MCF 10A (cell line): ENCODE measurements at regions of chr3 and their contacts with region 1.

Region 1: DNA sequence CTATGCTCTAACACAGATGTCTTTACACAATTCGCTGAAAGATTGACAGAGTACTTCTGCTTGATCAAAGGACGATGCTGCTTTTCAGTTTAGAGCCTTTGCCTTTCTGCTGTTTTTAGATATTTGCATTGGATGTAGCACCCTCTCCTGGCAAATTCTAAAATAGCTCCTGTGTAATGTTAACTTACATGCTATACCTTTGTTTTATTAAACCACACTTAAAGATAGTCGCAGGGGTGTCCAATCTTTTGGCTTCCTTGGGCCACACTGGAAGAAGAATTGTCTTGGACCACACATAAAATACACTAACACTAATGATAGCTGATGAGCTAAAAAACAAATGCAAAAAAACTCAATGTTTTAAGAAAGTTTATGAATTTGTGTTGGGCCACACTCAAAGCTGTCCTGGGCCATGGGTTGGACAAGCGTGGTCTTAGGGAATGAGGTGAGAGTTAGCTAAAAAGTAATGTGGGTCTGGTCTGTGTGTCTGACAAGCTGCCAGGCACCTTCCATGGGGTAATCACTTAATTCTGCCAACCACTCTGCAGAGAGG is 62.9 kb downstream of the ATG7 start:
- DNase-seq: peak; percentile 77
- H3K4me3 Mint-ChIP-seq: no peak overlapping the region
- H3K27ac Mint-ChIP-seq: no peak overlapping the region
- H3K4me1 Mint-ChIP-seq: no peaks in the 10 kb centered on the region
- H3K27me3 Mint-ChIP-seq: no peaks in the 10 kb centered on the region
- CTCF ChIP-seq: peak; percentile 55

Region 2: DNA sequence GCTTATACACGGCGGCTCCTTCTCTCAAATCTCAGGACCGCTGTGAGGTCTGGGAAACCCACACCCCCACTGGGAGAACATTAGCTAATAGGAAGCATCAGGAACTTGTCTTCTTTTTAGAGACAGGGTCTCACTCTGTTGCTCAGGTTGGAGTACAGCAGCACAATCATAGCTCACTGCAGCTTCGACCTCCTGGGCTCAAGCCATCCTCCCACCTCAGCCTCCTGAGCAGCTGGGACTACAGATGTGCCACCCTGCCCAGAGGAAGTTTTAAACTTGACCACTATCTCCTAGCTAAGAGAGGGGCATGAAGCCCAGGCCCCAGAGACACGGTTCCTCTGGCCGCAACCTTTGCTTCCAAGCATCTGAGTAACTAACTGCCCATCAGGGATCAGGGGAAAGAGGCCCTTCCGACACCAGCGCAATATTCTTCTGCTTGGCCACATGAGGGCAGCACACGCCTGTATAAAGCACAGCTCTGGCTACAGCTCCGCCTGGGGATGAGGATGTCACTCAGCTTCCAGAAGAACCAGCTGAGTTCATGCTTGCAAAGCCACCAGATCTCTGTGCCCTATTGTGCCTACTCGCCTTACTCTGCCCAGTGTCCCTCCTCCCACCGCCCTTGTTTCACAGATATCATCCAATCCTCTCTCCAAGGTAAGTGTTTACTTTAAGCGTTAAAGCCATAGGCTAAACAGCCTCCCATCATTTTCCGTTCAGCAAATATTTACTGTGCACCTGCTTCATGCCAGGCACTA is 576.6 kb before region 1 on chr3:
- CTCF ChIA-PET with region 1: interaction called, 27 read pairs
- POLR2A ChIA-PET with region 1: no interaction called
- intact Hi-C with region 1: loop called (anchors 10 kb)
- DNase-seq: peak; percentile 65
- H3K4me3 Mint-ChIP-seq: no peak overlapping the region
- H3K27ac Mint-ChIP-seq: no peak overlapping the region
- H3K4me1 Mint-ChIP-seq: no peaks in the 10 kb centered on the region
- H3K27me3 Mint-ChIP-seq: peaks cover 13% of the 10 kb centered on the region
- CTCF ChIP-seq: peak; percentile 85

Region 3: GRCh38 chr3:11236595-11237461 is 98.3 kb before region 1 on chr3:
- CTCF ChIA-PET with region 1: interaction called, 80 read pairs
- POLR2A ChIA-PET with region 1: interaction called, 14 read pairs
- intact Hi-C with region 1: loop called (anchors 1 kb)
- DNase-seq: peak; percentile 82
- H3K4me3 Mint-ChIP-seq: no peak overlapping the region
- H3K27ac Mint-ChIP-seq: peak overlapping the region; percentile 49
- H3K4me1 Mint-ChIP-seq: peaks cover 26% of the 10 kb centered on the region
- H3K27me3 Mint-ChIP-seq: no peaks in the 10 kb centered on the region
- CTCF ChIP-seq: peak; percentile 95

Region 4: DNA sequence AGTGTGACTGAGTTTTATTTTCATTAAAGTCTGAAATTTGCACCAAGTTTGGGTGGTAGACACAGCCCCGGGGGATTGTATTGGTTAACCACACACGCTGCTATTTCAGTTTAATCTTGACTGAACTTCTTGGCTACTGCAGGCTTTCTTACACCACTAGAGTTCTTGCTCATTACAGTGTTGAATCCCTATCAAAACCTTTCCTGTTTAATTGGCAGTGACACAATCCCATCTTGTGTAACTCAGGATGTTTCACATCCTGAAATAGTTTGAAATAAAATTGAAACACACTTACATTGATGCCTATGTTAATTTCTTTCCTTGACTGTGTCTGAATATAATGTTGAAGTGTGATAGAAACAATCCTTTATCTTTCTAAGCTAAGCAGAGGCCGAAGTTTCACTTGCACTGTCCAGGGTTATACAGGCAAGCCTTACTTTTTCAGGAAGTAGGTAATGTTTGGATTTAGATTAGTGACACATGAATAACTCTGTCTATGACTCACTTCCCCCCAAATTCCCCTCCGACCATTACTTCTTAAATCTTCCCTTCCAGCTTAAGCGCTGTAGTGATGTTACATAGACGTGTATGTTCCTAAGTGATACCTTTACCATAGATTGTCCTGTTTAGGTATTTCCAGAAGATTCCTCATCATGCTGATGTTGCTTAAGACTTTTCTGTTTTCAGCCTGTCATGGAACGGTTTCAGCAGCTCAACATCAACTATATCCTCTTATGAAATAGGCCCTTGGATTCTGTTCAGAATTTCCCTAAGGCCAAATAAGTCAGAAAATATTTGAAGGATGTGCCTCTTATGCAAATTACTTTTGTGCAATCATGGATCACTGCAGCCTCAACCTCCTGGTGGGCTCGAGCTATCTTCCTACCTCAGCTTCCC is 46.1 kb before region 1 on chr3:
- CTCF ChIA-PET with region 1: interaction called, 10 read pairs
- POLR2A ChIA-PET with region 1: interaction called, 3 read pairs
- intact Hi-C with region 1: no loop called
- DNase-seq: peak; percentile 93
- H3K4me3 Mint-ChIP-seq: peak overlapping the region; percentile 40
- H3K27ac Mint-ChIP-seq: peak overlapping the region; percentile 89
- H3K4me1 Mint-ChIP-seq: peaks cover 39% of the 10 kb centered on the region
- H3K27me3 Mint-ChIP-seq: no peaks in the 10 kb centered on the region
- CTCF ChIP-seq: no peak

Region 5: GRCh38 chr3:11307830-11308432 is 27.2 kb before region 1 on chr3:
- CTCF ChIA-PET with region 1: interaction called, 13 read pairs
- POLR2A ChIA-PET with region 1: interaction called, 3 read pairs
- intact Hi-C with region 1: no loop called
- DNase-seq: no peak
- H3K4me3 Mint-ChIP-seq: no peak overlapping the region
- H3K27ac Mint-ChIP-seq: peak overlapping the region; percentile 53
- H3K4me1 Mint-ChIP-seq: peaks cover 8% of the 10 kb centered on the region
- H3K27me3 Mint-ChIP-seq: no peaks in the 10 kb centered on the region
- CTCF ChIP-seq: no peak

Region 6: DNA sequence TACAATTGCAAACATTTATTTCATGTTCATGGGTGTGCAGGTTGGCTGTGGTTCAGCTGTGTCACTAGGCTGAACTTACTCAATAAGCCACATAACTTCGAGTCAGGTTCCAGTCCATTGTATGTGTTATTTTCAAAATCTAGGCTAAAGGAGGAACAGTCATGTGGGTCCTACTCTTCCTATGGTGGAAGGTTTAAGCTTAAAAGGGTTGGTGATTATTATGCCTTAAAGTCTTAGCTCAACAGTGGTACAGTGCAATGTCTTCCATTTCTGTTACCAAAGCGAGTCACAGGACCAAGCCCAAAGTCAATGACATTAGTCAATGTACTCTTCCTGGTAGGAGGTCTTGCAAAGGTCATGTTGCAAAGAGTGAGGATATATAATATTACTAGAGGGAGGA is 15.2 kb after region 1 on chr3:
- CTCF ChIA-PET with region 1: interaction called, 18 read pairs
- POLR2A ChIA-PET with region 1: interaction called, 3 read pairs
- intact Hi-C with region 1: no loop called
- DNase-seq: peak; percentile 17
- H3K4me3 Mint-ChIP-seq: no peak overlapping the region
- H3K27ac Mint-ChIP-seq: no peak overlapping the region
- H3K4me1 Mint-ChIP-seq: peaks cover 18% of the 10 kb centered on the region
- H3K27me3 Mint-ChIP-seq: no peaks in the 10 kb centered on the region
- CTCF ChIP-seq: no peak